ENCODE measurements at regions of chr17 and their contacts with region 1.

Region 1: GRCh38 chr17:4215882-4216570 is 47.8 kb downstream of the ANKFY1 start:
- DNase-seq: no peak
- H3K4me3 ChIP-seq: no peak overlapping the region
- H3K27ac ChIP-seq: peak overlapping the region; percentile 39 to 73 (median 43)
- H3K4me1 ChIP-seq: peaks cover 1 to 30% (median 18%) of the 10 kb centered on the region in 4 donors
- H3K27me3 ChIP-seq: no peaks in the 10 kb centered on the region
- CTCF ChIP-seq: no peak
- EP300 ChIP-seq: no peak
- POLR2A ChIP-seq: no peak

Region 2: GRCh38 chr17:4263282-4264215 is 47.5 kb after region 1 on chr17 and contains the start of gene ANKFY1:
- in situ Hi-C with region 1: no loop called
- intact Hi-C with region 1: loop called (anchors 5 kb)
- DNase-seq: peak; percentile 97
- H3K4me3 ChIP-seq: peak within 1 kb of the TSS; percentile 89 to 100 (median 94)
- H3K27ac ChIP-seq: peak within 1 kb of the TSS; percentile 89 to 93 (median 92)
- H3K4me1 ChIP-seq: peaks cover 17 to 32% (median 23%) of the 10 kb centered on the region in 4 donors
- H3K27me3 ChIP-seq: no peaks in the 10 kb centered on the region
- CTCF ChIP-seq: peak in 1 of 5 experiments; percentile 7
- EP300 ChIP-seq: no peak
- POLR2A ChIP-seq: peak; percentile 71
- total RNA-seq, gene ANKFY1: 53.0 to 69.9 (median 54.7) TPM

Region 3: DNA sequence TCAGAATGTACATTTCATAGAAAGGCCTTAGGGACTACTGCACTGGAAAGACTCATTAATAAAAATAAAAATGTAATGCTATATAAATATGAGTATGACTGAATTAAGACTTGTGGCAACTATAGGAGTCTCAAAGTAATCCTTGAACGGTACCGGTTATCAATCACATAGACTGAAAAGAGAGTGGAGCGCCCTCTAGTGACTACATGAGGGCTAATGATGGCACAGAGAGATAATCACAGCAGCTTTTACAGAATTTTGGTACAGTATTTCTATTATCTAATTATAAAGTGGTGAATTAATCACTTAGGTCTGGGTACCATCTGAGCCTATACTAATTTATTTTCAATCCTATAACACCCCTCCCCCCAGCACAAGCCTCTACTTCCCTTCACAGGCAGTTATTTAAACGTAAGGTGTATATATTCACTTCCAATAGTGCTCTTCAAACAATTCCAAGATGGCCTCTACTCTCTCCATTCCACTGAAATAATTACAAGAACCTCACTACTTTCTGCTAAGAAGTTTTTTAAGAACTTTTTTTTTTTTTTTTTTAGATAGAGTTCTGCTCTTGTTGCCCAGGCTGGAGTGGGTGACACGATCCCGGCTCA is 88.5 kb after region 1 on chr17:
- in situ Hi-C with region 1: loop called in 1 of 4 experiments (anchors 10 kb)
- intact Hi-C with region 1: loop called (anchors 10 kb)
- DNase-seq: peak; percentile 46
- H3K4me3 ChIP-seq: no peak overlapping the region
- H3K27ac ChIP-seq: no peak overlapping the region
- H3K4me1 ChIP-seq: peaks cover 0 to 11% (median 1%) of the 10 kb centered on the region in 4 donors
- H3K27me3 ChIP-seq: no peaks in the 10 kb centered on the region
- CTCF ChIP-seq: peak; percentile 58 to 82 (median 71)
- EP300 ChIP-seq: no peak
- POLR2A ChIP-seq: no peak

Region 4: GRCh38 chr17:4366327-4367063 is 150.5 kb after region 1 on chr17 and contains the start of gene UBE2G1:
- in situ Hi-C with region 1: no loop called
- intact Hi-C with region 1: loop called (anchors 5 kb)
- DNase-seq: peak; percentile 99
- H3K4me3 ChIP-seq: peak within 1 kb of the TSS; percentile 85 to 99 (median 96)
- H3K27ac ChIP-seq: peak within 1 kb of the TSS; percentile 96 to 99 (median 98)
- H3K4me1 ChIP-seq: peaks cover 0 to 38% (median 15%) of the 10 kb centered on the region in 4 donors
- H3K27me3 ChIP-seq: no peaks in the 10 kb centered on the region
- CTCF ChIP-seq: peak in 3 of 5 experiments; percentile 11 to 40 (median 35)
- EP300 ChIP-seq: no peak
- POLR2A ChIP-seq: peak; percentile 93
- total RNA-seq, gene UBE2G1: 41.6 to 104 (median 53.0) TPM

Region 5: GRCh38 chr17:4394208-4395110 is 178.4 kb after region 1 on chr17:
- in situ Hi-C with region 1: no loop called
- intact Hi-C with region 1: no loop called
- DNase-seq: no peak
- H3K4me3 ChIP-seq: no peak overlapping the region
- H3K27ac ChIP-seq: peak overlapping the region in 1 of 4 donors; percentile 13
- H3K4me1 ChIP-seq: peaks cover 0 to 8% (median 6%) of the 10 kb centered on the region in 4 donors
- H3K27me3 ChIP-seq: no peaks in the 10 kb centered on the region
- CTCF ChIP-seq: no peak
- EP300 ChIP-seq: no peak
- POLR2A ChIP-seq: no peak

Region 6: DNA sequence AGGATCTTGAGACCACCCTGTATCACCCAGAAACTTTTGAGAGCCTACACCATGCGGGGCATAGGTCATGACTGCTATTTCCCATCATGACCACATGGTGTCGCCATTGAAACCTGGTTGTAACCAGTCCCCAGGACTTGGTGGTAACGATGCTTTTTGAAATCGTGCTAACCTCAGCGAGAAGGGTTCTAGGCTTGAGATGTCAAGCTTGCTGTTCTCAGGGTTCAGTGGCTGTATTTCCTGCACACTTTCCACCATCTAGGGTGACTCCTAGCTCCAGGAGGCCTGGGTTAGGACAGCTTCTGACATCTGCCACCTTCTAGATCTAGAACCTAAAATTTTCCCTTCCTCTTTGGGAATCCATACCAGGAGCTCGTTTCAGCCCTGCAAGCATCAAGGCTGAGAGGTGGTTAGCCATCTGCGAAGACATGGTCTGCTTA is 204.7 kb after region 1 on chr17:
- in situ Hi-C with region 1: loop called in 2 of 4 experiments (anchors 5 to 10 kb)
- intact Hi-C with region 1: no loop called
- DNase-seq: peak; percentile 66
- H3K4me3 ChIP-seq: no peak overlapping the region
- H3K27ac ChIP-seq: no peak overlapping the region
- H3K4me1 ChIP-seq: peaks cover 0 to 5% (median 2%) of the 10 kb centered on the region in 4 donors
- H3K27me3 ChIP-seq: no peaks in the 10 kb centered on the region
- CTCF ChIP-seq: peak; percentile 78 to 88 (median 85)
- EP300 ChIP-seq: no peak
- POLR2A ChIP-seq: no peak

Measured in transverse colon (tissue), 4 donors.